K562 (cell line): ENCODE measurements at regions of chr18 and their contacts with region 1.

Region 1: DNA sequence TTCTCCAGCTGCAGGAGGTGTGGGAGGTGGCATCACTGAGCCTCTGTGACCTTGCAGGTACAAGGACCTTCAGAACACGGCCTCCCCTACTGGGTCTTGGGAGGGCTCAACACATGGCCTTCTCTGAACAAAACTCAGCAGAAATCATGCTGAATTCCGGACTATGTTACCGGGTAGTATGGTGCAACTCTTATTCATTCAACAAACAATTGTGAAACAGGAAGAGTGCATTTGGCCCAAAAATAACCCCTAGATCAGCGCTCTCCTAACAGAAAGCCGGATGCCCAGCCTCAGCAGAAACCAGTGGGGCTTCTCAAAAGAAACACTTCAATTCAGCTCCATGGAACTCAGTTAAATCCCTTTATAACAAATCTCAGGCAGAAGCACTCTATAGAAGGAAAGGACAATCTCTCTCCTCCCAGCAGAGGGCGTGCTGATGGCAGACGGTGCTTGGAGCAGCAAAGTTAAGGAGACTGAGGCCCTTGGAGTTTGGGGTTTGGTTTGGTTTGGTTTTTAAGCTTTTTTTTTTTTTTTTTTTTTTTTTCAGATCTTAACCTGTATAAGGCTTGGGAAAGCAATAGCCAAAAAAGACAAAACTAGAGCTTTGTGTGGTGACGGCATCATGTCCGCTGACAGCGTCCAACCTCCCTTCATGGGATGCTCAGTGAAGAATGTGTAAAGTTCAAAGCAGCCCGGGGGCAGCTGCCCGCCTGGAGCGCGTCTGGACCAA is 104.2 kb upstream of the SALL3 start:
- DNase-seq: peak; percentile 19 to 45 (median 32)
- ATAC-seq: peak; percentile 81
- H3K4me3 ChIP-seq: no peak overlapping the region
- H3K27ac ChIP-seq: no peak overlapping the region
- H3K4me1 ChIP-seq: no peaks in the 10 kb centered on the region
- H3K27me3 ChIP-seq: peaks cover 0 to 8% of the 10 kb centered on the region in 2 experiments; a peak in 2 of 5 replicates
- CTCF ChIP-seq: peak; percentile 42 to 63 (median 56)
- EP300 ChIP-seq: no peak
- POLR2A ChIP-seq: no peak
- RAD21 ChIP-seq: peak in 1 of 2 experiments; percentile 40; a peak in 2 of 4 replicates

Region 2: GRCh38 chr18:78619854-78620253 is 255.6 kb before region 1 on chr18:
- CTCF ChIA-PET with region 1: no interaction called
- POLR2A ChIA-PET with region 1: no interaction called
- in situ Hi-C with region 1: no loop called
- intact Hi-C with region 1: no loop called
- DNase-seq: no peak
- ATAC-seq: no peak
- H3K4me3 ChIP-seq: no peak overlapping the region
- H3K27ac ChIP-seq: no peak overlapping the region
- H3K4me1 ChIP-seq: no peaks in the 10 kb centered on the region
- H3K27me3 ChIP-seq: peaks cover 0 to 7% of the 10 kb centered on the region in 2 experiments; a peak in 1 of 5 replicates
- CTCF ChIP-seq: no peak
- EP300 ChIP-seq: no peak
- POLR2A ChIP-seq: no peak
- RAD21 ChIP-seq: no peak

Region 3: DNA sequence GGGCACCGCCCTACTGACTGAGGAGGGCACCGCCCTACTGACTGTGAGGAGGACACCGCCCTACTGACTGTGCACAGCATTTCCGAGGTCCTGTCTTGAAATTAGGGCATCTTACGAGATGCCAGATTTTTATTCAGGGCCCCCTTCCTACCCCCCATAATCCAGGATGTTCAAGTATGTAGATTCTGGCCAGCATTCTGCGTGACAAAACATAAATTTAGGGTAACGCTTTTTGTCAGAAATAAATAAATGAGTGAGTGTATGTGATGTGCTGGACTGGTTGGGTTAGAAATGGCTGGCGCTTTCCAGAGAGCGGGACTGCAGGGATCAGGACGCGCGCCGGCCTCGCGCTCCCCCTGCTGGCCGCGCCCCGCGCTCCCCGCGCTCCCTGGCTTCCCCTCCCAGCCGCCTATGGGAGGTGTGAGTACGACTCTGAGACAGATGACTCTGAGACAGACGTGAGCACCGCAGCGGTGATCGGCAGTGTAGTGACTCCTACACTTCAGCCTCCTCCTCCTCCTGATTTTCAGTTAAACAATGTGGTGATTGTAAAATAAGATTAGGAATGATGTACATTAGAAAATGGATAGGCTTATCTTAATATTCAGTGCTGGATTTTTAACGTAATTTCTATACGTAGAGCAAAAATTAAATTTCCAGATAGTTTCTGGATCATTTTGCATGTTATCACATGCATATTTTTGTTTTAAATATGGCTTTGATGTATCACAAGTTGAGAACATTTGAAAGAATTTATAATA is 371.1 kb after region 1 on chr18:
- CTCF ChIA-PET with region 1: no interaction called
- POLR2A ChIA-PET with region 1: no interaction called
- in situ Hi-C with region 1: no loop called
- intact Hi-C with region 1: loop called (anchors 2 kb)
- DNase-seq: peak; percentile 60 to 84 (median 71)
- ATAC-seq: peak; percentile 100
- H3K4me3 ChIP-seq: no peak overlapping the region
- H3K27ac ChIP-seq: no peak overlapping the region
- H3K4me1 ChIP-seq: peaks cover 0 to 13% of the 10 kb centered on the region in 2 experiments; a peak in 2 of 5 replicates
- H3K27me3 ChIP-seq: no peaks in the 10 kb centered on the region
- CTCF ChIP-seq: peak; percentile 85 to 89 (median 89)
- EP300 ChIP-seq: no peak
- POLR2A ChIP-seq: no peak
- RAD21 ChIP-seq: peak; percentile 64 to 80; a peak in 3 of 4 replicates